HEK293 (cell line): ENCODE measurements at regions of chr6 and their contacts with region 1.

Region 1: GRCh38 chr6:85642774-85643536 is at the start of gene SYNCRIP:
- H3K4me3 ChIP-seq: peak within 1 kb of the TSS; percentile 79
- H3K27ac ChIP-seq: peak within 1 kb of the TSS; percentile 98
- H3K4me1 ChIP-seq: peaks cover 3% of the 10 kb centered on the region; the same call in 1 of the 2 replicates
- CTCF ChIP-seq: peak; percentile 50; the same call in 1 of the 2 replicates

Region 2: GRCh38 chr6:85593438-85594196 is 49.3 kb before region 1 on chr6 and contains the start of gene SNX14:
- CTCF ChIA-PET with region 1: interaction called, 3 read pairs
- POLR2A ChIA-PET with region 1: interaction called, 39 read pairs
- H3K4me3 ChIP-seq: peak within 1 kb of the TSS; percentile 91
- H3K27ac ChIP-seq: peak within 1 kb of the TSS; percentile 74
- H3K4me1 ChIP-seq: no peaks in the 10 kb centered on the region
- CTCF ChIP-seq: peak; percentile 86

Region 3: GRCh38 chr6:85628353-85628752 is 14.6 kb before region 1 on chr6:
- CTCF ChIA-PET with region 1: interaction called, 3 read pairs
- POLR2A ChIA-PET with region 1: interaction called, 30 read pairs
- H3K4me3 ChIP-seq: no peak overlapping the region
- H3K27ac ChIP-seq: no peak overlapping the region
- H3K4me1 ChIP-seq: no peaks in the 10 kb centered on the region
- CTCF ChIP-seq: no peak

Region 4: DNA sequence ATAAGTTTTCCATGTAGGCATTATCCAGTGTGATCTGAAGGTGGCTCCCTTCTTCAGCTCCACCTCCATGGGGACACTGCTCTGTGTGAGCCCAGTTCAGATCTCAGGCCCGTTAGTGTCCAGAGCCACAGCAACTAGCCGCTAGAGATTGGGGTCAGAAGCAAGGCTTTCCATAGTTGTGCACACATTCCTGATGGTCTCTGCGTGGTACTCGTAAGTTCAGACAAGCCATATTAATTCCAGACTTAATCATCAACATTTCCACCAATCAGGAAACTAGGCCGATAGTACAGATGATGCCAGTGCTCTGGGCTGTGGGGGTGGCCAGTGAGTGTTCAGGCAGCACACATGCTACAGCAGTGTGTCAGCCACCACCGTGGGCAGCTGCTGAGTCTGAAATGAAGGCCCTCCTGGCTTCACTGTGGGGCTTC is 17.2 kb after region 1 on chr6:
- CTCF ChIA-PET with region 1: interaction called, 3 read pairs
- POLR2A ChIA-PET with region 1: interaction called, 15 read pairs
- H3K4me3 ChIP-seq: no peak overlapping the region
- H3K27ac ChIP-seq: no peak overlapping the region
- H3K4me1 ChIP-seq: no peaks in the 10 kb centered on the region
- CTCF ChIP-seq: peak; percentile 52; the same call in 1 of the 2 replicates

Region 5: GRCh38 chr6:85669735-85670194 is 26.8 kb after region 1 on chr6:
- CTCF ChIA-PET with region 1: interaction called, 3 read pairs
- POLR2A ChIA-PET with region 1: interaction called, 510 read pairs
- H3K4me3 ChIP-seq: no peak overlapping the region
- H3K27ac ChIP-seq: no peak overlapping the region
- H3K4me1 ChIP-seq: no peaks in the 10 kb centered on the region
- CTCF ChIP-seq: no peak

Region 6: GRCh38 chr6:85726206-85726605 is 83.3 kb after region 1 on chr6:
- CTCF ChIA-PET with region 1: no interaction called
- POLR2A ChIA-PET with region 1: no interaction called
- H3K4me3 ChIP-seq: no peak overlapping the region
- H3K27ac ChIP-seq: no peak overlapping the region
- H3K4me1 ChIP-seq: no peaks in the 10 kb centered on the region
- CTCF ChIP-seq: no peak